BJ (cell line): ENCODE measurements at regions of chr7 and their contacts with region 1.

Region 1: DNA sequence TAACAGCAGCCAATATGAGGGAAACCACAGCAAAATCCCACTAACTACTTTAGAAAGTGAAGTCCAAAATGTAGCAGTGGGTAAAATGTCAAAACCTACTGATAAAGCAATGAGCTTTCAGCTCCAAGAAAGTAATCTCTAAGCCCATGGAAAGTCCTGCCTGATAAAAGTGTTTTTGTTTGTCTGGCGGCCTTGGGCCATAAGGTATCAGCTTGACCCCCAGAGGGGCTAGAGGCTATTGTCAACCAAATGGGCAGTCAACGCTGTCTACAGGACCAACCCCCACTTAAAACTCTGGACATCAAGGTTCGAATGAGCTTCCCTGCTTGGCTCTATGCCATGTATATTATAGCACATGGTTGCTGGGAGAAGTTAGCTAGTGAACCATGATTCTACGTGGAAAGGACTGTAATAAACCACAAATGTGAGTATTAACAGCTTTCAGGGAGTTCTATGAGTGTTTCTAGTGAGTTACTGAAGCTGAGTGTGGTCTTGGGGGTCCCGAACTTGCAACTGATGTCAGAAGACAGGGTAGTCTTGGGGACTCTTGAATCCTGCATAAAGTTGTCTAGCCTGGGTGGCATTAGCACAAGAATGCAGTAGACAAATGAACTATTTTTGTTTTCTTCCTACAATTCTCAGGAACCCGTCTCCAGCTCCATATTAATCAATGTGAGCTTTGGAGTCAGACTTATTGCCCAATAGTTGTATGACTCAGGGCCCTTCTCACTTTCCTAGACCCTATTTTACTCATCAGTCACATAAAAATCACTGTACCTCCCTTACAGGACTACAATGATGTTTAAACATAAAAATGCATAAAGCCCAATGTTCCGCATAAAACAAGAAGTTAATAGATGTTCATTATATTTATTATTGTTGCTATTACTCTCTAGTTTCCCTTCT is 164.9 kb downstream of the DGKI start:
- DNase-seq: peak; percentile 88
- H3K4me3 ChIP-seq: no peak overlapping the region
- H3K27me3 ChIP-seq: no peaks in the 10 kb centered on the region
- CTCF ChIP-seq: no peak

Region 2: GRCh38 chr7:137670199-137671071 is 11.5 kb before region 1 on chr7:
- CTCF ChIA-PET with region 1: interaction called, 32 read pairs
- POLR2A ChIA-PET with region 1: interaction called, 3 read pairs
- DNase-seq: peak; percentile 25
- H3K4me3 ChIP-seq: no peak overlapping the region
- H3K27me3 ChIP-seq: no peaks in the 10 kb centered on the region
- CTCF ChIP-seq: no peak